ENCODE measurements at regions of chr14 and their contacts with region 1.

Region 1: GRCh38 chr14:76654573-76655090 is 106.6 kb upstream of the VASH1 start:
- DNase-seq: no peak
- ATAC-seq: no peak

Region 2: DNA sequence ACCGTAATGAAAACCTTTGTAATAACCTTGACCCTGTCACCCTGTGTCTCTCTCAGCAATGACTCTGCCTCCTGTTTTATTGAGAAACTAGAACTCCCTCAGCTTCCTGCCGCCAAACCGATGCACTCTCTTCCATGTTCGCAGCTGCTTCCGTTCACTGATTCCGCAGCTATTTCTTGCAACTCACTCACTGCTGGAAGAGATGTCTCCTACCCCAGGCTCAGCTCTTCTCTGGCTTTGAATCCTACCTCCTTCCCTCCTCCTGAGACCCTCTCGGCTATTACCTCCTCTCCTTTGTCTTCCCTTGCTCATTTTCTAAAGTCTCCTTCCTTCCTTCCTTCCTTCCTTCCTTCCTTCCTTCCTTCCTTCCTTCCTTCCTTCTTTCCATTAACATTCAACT is 207.7 kb before region 1 on chr14:
- intact Hi-C with region 1: loop called in 1 of 2 experiments (anchors 10 kb)
- DNase-seq: no peak
- ATAC-seq: no peak

Measured in left colon (tissue), 2 donors.